H1 (cell line): ENCODE measurements at regions of chr20 and their contacts with region 1.

Region 1: GRCh38 chr20:32521780-32522525 is 63.2 kb downstream of the NOL4L start:
- DNase-seq: peak; percentile 54 to 92
- H3K4me3 ChIP-seq: peak overlapping the region in 1 of 4 experiments; percentile 23; a peak in 1 of 8 replicates
- H3K27ac ChIP-seq: no peak overlapping the region
- H3K4me1 ChIP-seq: peaks cover 0 to 7% (median under 1%) of the 10 kb centered on the region in 4 experiments; a peak in 4 of 7 replicates
- H3K27me3 ChIP-seq: 0 out of 7 replicates have a peak, but pooled peaks cover 0 to 2% (median 0%) of the 10 kb centered on the region in 4 experiments
- CTCF ChIP-seq: peak; percentile 96 to 98 (median 97)
- EP300 ChIP-seq: no peak
- POLR2A ChIP-seq: no peak
- RAD21 ChIP-seq: peak; percentile 100

Region 2: GRCh38 chr20:32240220-32240619 is 281.7 kb before region 1 on chr20:
- CTCF ChIA-PET with region 1: no interaction called
- POLR2A ChIA-PET with region 1: no interaction called
- DNase-seq: peak in 1 of 2 experiments; percentile 48
- H3K4me3 ChIP-seq: no peak overlapping the region
- H3K27ac ChIP-seq: no peak overlapping the region
- H3K4me1 ChIP-seq: peaks cover 0 to 7% (median 4%) of the 10 kb centered on the region in 4 experiments; a peak in 4 of 7 replicates
- H3K27me3 ChIP-seq: no peaks in the 10 kb centered on the region
- CTCF ChIP-seq: no peak
- EP300 ChIP-seq: no peak
- POLR2A ChIP-seq: no peak
- RAD21 ChIP-seq: no peak

Region 3: GRCh38 chr20:32535953-32536823 is 14.2 kb after region 1 on chr20:
- CTCF ChIA-PET with region 1: interaction called, 47 read pairs
- POLR2A ChIA-PET with region 1: interaction called, 7 read pairs
- DNase-seq: peak in 1 of 2 experiments; percentile 74
- H3K4me3 ChIP-seq: peak overlapping the region; percentile 17 to 62 (median 40); a peak in 7 of 8 replicates
- H3K27ac ChIP-seq: no peak overlapping the region
- H3K4me1 ChIP-seq: peaks cover 10 to 24% (median 17%) of the 10 kb centered on the region in 4 experiments
- H3K27me3 ChIP-seq: peaks cover 3 to 22% (median 20%) of the 10 kb centered on the region in 4 experiments
- CTCF ChIP-seq: no peak
- EP300 ChIP-seq: no peak
- POLR2A ChIP-seq: no peak
- RAD21 ChIP-seq: no peak

Region 4: GRCh38 chr20:32570401-32571190 is 48.6 kb after region 1 on chr20:
- CTCF ChIA-PET with region 1: interaction called, 10 read pairs
- POLR2A ChIA-PET with region 1: no interaction called
- DNase-seq: no peak
- H3K4me3 ChIP-seq: no peak overlapping the region
- H3K27ac ChIP-seq: no peak overlapping the region
- H3K4me1 ChIP-seq: peaks cover 0 to 20% (median 9%) of the 10 kb centered on the region in 4 experiments; a peak in 5 of 7 replicates
- H3K27me3 ChIP-seq: peaks cover 0 to 2% (median 0%) of the 10 kb centered on the region in 4 experiments; a peak in 2 of 7 replicates
- CTCF ChIP-seq: no peak
- EP300 ChIP-seq: no peak
- POLR2A ChIP-seq: no peak
- RAD21 ChIP-seq: no peak

Region 5: GRCh38 chr20:32621071-32621890 is 99.3 kb after region 1 on chr20:
- CTCF ChIA-PET with region 1: interaction called, 31 read pairs
- POLR2A ChIA-PET with region 1: no interaction called
- DNase-seq: no peak
- H3K4me3 ChIP-seq: no peak overlapping the region
- H3K27ac ChIP-seq: no peak overlapping the region
- H3K4me1 ChIP-seq: peaks cover 0 to 2% (median 0%) of the 10 kb centered on the region in 4 experiments; a peak in 1 of 7 replicates
- H3K27me3 ChIP-seq: no peaks in the 10 kb centered on the region
- CTCF ChIP-seq: no peak
- EP300 ChIP-seq: no peak
- POLR2A ChIP-seq: no peak
- RAD21 ChIP-seq: no peak

Region 6: GRCh38 chr20:32652739-32653526 is 131.0 kb after region 1 on chr20:
- CTCF ChIA-PET with region 1: interaction called, 246 read pairs
- POLR2A ChIA-PET with region 1: interaction called, 3 read pairs
- DNase-seq: peak; percentile 62 to 97
- H3K4me3 ChIP-seq: no peak overlapping the region; a peak in 1 of 8 replicates
- H3K27ac ChIP-seq: no peak overlapping the region
- H3K4me1 ChIP-seq: peaks cover 0 to 7% (median 0%) of the 10 kb centered on the region in 4 experiments; a peak in 2 of 7 replicates
- H3K27me3 ChIP-seq: no peaks in the 10 kb centered on the region
- CTCF ChIP-seq: peak; percentile 94 to 98 (median 96)
- EP300 ChIP-seq: no peak
- POLR2A ChIP-seq: no peak
- RAD21 ChIP-seq: peak; percentile 99 to 100

Region 7: DNA sequence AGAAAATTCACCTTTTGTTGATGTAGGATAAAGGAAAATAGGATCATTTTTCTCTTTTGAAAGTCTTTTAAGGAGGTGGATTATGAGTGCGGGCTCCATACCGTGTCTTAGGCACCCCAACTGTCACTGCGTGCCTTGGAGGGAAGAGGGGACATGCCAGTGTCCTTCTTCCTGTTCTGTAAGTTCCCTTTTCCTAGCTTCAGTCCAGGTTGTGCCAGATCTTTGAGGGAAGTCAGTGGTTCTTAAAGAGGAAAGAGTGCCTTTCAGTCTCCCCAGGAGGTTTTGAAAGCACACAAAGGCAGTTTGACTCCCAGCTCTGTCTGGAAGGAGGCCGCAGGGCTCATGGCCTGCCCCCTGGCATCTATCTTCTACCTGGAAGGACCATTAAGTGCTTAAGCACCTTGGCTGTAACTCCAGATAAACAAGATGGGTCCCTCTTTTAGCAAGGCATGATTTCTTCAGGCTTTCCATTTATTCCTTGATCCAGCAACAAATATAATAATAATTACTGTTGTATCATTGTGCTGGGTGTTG is 349.7 kb after region 1 on chr20:
- CTCF ChIA-PET with region 1: no interaction called
- POLR2A ChIA-PET with region 1: no interaction called
- DNase-seq: no peak
- H3K4me3 ChIP-seq: no peak overlapping the region
- H3K27ac ChIP-seq: no peak overlapping the region
- H3K4me1 ChIP-seq: no peaks in the 10 kb centered on the region; a peak in 2 of 7 replicates
- H3K27me3 ChIP-seq: no peaks in the 10 kb centered on the region
- CTCF ChIP-seq: no peak
- EP300 ChIP-seq: no peak
- POLR2A ChIP-seq: no peak
- RAD21 ChIP-seq: no peak

Region 8: GRCh38 chr20:33202451-33202850 is 680.5 kb after region 1 on chr20:
- CTCF ChIA-PET with region 1: no interaction called
- POLR2A ChIA-PET with region 1: no interaction called
- DNase-seq: no peak
- H3K4me3 ChIP-seq: no peak overlapping the region
- H3K27ac ChIP-seq: no peak overlapping the region
- H3K4me1 ChIP-seq: no peaks in the 10 kb centered on the region
- H3K27me3 ChIP-seq: no peaks in the 10 kb centered on the region
- CTCF ChIP-seq: no peak
- EP300 ChIP-seq: no peak
- POLR2A ChIP-seq: no peak
- RAD21 ChIP-seq: no peak